K562 (cell line): ENCODE measurements at regions of chr17 and their contacts with region 1.

Region 1: GRCh38 chr17:77531641-77532040 is 390.9 kb downstream of the SEC14L1 start:
- DNase-seq: no peak
- ATAC-seq: no peak
- H3K4me3 ChIP-seq: no peak overlapping the region
- H3K27ac ChIP-seq: no peak overlapping the region
- H3K4me1 ChIP-seq: peaks cover 0 to 6% of the 10 kb centered on the region in 2 experiments; a peak in 2 of 5 replicates
- H3K27me3 ChIP-seq: peaks cover 16 to 47% of the 10 kb centered on the region in 2 experiments; a peak in 4 of 5 replicates
- CTCF ChIP-seq: no peak
- EP300 ChIP-seq: no peak
- POLR2A ChIP-seq: no peak
- RAD21 ChIP-seq: no peak

Region 2: DNA sequence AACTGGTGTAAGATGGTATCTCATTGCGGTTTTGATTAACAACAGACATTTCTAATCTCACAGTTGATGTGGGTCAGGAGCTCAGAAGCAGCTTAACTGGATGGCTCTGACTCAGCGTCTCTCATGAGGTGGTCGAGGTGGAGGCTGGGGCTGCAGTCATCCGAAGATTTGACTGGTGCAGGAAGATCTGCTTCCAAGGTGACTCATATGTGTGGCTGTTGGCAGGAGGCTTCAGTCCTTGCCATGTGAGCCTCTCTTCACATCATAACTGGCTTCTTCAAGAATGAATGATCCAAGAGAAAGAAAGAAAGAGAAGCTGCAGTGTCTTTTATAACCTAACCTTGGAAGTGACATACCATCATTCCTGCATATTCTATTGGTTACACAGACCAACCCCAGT is 14.7 kb before region 1 on chr17:
- CTCF ChIA-PET with region 1: no interaction called
- POLR2A ChIA-PET with region 1: no interaction called
- in situ Hi-C with region 1: no loop called
- intact Hi-C with region 1: loop called (anchors 1 kb)
- DNase-seq: no peak
- ATAC-seq: no peak
- H3K4me3 ChIP-seq: no peak overlapping the region
- H3K27ac ChIP-seq: no peak overlapping the region
- H3K4me1 ChIP-seq: no peaks in the 10 kb centered on the region; a peak in 1 of 5 replicates
- H3K27me3 ChIP-seq: peaks cover 11 to 30% of the 10 kb centered on the region in 2 experiments
- CTCF ChIP-seq: no peak
- EP300 ChIP-seq: no peak
- POLR2A ChIP-seq: no peak
- RAD21 ChIP-seq: no peak